ENCODE measurements at regions of chr7 and their contacts with region 1.

Region 1: GRCh38 chr7:31648288-31648687 is 38.7 kb upstream of the PPP1R17 start:
- DNase-seq: no peak
- H3K4me3 ChIP-seq: no peak overlapping the region
- H3K27ac ChIP-seq: no peak overlapping the region
- H3K4me1 ChIP-seq: peaks cover 3 to 32% (median 16%) of the 10 kb centered on the region in 4 experiments; a peak in 4 of 7 replicates
- H3K27me3 ChIP-seq: no peaks in the 10 kb centered on the region
- CTCF ChIP-seq: peak in 2 of 3 experiments; percentile 26 to 43; a peak in 2 of 4 replicates
- EP300 ChIP-seq: no peak
- POLR2A ChIP-seq: no peak
- RAD21 ChIP-seq: peak; percentile 47 to 59

Region 2: DNA sequence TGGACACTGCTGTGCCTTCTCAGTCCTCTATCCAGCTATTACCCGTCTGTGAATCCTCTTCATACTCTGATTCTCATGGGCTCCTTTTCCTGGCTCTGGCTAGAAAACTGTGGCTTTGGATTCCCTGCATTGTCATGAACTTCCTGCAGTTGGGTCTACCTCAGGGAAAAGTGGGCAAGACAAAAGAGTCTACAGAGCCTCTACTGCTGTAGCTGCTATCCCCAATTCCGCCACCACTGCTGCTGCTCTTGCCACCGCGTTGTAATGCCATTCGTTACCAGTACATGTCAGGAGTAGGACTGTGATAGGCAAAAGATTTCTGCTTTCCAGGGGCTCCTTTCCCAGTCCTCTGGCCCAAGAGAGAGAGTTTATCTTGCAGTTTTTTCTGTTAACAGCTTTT is 14.8 kb after region 1 on chr7:
- CTCF ChIA-PET with region 1: interaction called, 13 read pairs
- POLR2A ChIA-PET with region 1: no interaction called
- DNase-seq: peak in 1 of 2 experiments; percentile 54
- H3K4me3 ChIP-seq: no peak overlapping the region
- H3K27ac ChIP-seq: no peak overlapping the region
- H3K4me1 ChIP-seq: peaks cover 0 to 4% (median 3%) of the 10 kb centered on the region in 4 experiments; a peak in 2 of 7 replicates
- H3K27me3 ChIP-seq: no peaks in the 10 kb centered on the region
- CTCF ChIP-seq: peak; percentile 77 to 98 (median 86)
- EP300 ChIP-seq: no peak
- POLR2A ChIP-seq: no peak
- RAD21 ChIP-seq: peak; percentile 41 to 66; a peak in 3 of 4 replicates

Region 3: GRCh38 chr7:31729198-31729781 is 81.0 kb after region 1 on chr7:
- CTCF ChIA-PET with region 1: interaction called, 19 read pairs
- POLR2A ChIA-PET with region 1: no interaction called
- DNase-seq: no peak
- H3K4me3 ChIP-seq: no peak overlapping the region
- H3K27ac ChIP-seq: no peak overlapping the region
- H3K4me1 ChIP-seq: no peaks in the 10 kb centered on the region
- H3K27me3 ChIP-seq: no peaks in the 10 kb centered on the region; a peak in 1 of 7 replicates
- CTCF ChIP-seq: peak in 2 of 3 experiments; percentile 38 to 41; a peak in 2 of 4 replicates
- EP300 ChIP-seq: no peak
- POLR2A ChIP-seq: no peak
- RAD21 ChIP-seq: peak in 1 of 2 experiments; percentile 34; a peak in 2 of 4 replicates

Region 4: DNA sequence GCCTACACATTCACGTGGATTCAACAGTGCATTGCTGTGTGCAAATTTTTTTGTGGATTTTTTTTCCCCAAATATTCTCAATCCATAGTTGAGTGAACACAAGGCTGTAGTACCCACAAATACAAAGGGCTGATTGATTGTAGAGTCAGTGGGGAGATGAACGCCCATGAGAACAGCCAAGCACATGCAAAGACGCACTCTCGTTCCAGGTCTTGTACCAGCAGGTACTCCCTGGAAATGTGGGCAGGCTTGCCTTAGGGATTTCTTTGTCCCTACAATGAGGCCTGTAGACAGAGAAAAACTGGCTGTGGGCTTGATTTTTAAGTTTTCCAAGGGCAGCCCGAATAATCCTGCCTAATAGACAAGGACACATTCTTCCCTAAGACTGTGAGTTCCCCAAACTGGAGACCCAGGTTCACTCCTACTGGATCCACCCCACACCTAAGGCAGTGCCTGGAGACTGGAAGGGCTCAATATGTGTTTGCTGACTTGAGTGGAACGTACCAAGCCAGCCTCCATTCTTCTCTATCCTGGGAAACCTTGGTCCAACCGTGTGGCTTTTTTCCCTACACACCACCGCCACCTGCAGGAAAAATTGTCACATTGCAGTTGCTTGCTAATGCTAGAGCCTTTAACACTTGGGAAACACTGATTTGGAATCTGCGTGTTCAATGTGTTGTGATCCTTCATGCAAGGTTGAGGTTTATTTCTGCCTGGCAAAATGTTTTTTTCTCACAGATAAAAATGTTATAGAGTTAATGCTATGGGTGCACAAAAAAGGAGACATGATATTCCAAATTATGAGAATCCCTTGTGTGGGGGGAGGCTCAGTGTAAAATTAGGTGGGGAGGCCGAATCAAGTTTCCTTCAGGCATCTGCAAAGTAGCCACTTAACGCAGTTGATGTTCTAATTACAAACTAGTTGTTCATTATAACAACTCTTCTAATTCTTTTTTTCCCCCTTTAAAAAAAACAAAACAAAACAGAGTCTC is 88.0 kb after region 1 on chr7:
- CTCF ChIA-PET with region 1: interaction called, 19 read pairs
- POLR2A ChIA-PET with region 1: no interaction called
- DNase-seq: peak; percentile 34 to 87
- H3K4me3 ChIP-seq: no peak overlapping the region
- H3K27ac ChIP-seq: no peak overlapping the region
- H3K4me1 ChIP-seq: peaks cover 0 to 4% (median 1%) of the 10 kb centered on the region in 4 experiments; a peak in 2 of 7 replicates
- H3K27me3 ChIP-seq: no peaks in the 10 kb centered on the region
- CTCF ChIP-seq: peak; percentile 58 to 92 (median 91)
- EP300 ChIP-seq: no peak
- POLR2A ChIP-seq: no peak
- RAD21 ChIP-seq: peak; percentile 99 to 100

Region 5: GRCh38 chr7:31892099-31892829 is 244.0 kb after region 1 on chr7:
- CTCF ChIA-PET with region 1: no interaction called
- POLR2A ChIA-PET with region 1: no interaction called
- DNase-seq: no peak
- H3K4me3 ChIP-seq: no peak overlapping the region
- H3K27ac ChIP-seq: no peak overlapping the region
- H3K4me1 ChIP-seq: no peaks in the 10 kb centered on the region
- H3K27me3 ChIP-seq: no peaks in the 10 kb centered on the region
- CTCF ChIP-seq: no peak
- EP300 ChIP-seq: no peak
- POLR2A ChIP-seq: no peak
- RAD21 ChIP-seq: no peak